Body of pancreas (tissue), 4 donors: ENCODE measurements at regions of chr19 and their contacts with region 1.

Region 1: GRCh38 chr19:1549332-1549945 is 18.7 kb downstream of the MEX3D start:
- DNase-seq: no peak
- ATAC-seq: no peak
- H3K4me3 ChIP-seq: no peak overlapping the region
- H3K27ac ChIP-seq: no peak overlapping the region
- H3K4me1 ChIP-seq: peaks cover 3% of the 10 kb centered on the region
- H3K27me3 ChIP-seq: peaks cover 0 to 9% of the 10 kb centered on the region in 2 donors
- CTCF ChIP-seq: no peak
- POLR2A ChIP-seq: no peak

Region 2: GRCh38 chr19:1690699-1691307 is 141.4 kb after region 1 on chr19:
- intact Hi-C with region 1: no loop called
- DNase-seq: peak in 3 of 4 donors; percentile 32 to 50 (median 35)
- ATAC-seq: no peak
- H3K4me3 ChIP-seq: no peak overlapping the region
- H3K27ac ChIP-seq: no peak overlapping the region
- H3K4me1 ChIP-seq: no peaks in the 10 kb centered on the region
- H3K27me3 ChIP-seq: peaks cover 0 to 8% of the 10 kb centered on the region in 2 donors
- CTCF ChIP-seq: no peak
- POLR2A ChIP-seq: no peak

Region 3: DNA sequence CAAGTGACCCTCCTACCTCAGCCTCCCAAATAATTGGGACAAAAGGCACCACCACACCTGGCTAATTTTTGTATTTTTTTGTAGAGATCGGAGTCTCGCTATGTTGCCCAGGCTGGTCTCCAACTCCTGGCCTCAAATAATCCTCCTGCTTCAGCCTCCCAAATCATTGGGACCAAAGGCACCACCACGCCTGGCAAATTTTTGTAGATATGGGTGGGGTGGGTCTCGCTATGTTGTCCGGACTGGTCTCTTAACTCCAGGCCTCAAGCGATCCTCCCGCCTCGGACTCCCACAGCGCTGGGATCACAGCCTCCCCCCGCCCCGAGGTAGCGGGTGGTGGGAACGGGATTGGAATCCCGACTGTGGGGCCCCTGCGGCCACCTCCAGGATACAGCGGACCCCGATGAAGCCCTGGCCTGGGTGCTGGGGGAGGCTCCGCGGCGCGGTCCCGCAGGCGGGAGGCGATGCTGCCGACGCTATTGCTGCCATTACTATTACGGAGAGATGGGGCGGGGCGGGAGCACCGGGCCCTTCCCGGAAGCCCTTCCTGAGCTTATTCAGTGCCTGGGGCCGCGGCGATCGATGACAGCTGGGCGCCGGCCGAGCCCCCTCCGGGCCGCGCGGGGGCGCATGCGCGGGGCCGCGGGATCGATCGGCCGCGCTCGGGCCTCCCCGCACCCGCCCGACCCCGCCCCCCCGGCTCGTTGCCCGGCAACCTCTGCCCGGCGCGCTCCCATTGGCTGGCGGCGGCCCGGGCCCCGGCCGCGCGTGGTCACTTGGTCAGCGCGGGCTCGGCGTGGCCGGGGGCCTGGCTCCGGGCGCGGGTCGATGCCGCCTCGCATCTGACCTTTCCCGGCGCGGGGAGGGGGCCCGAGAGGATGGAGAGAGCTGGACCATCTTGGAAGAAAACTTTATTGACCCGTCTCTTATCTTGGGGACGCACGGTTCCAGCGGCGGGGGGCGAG is 175.9 kb after region 1 on chr19:
- intact Hi-C with region 1: no loop called
- DNase-seq: peak; percentile 69 to 79 (median 72)
- ATAC-seq: peak; percentile 89
- H3K4me3 ChIP-seq: no peak overlapping the region
- H3K27ac ChIP-seq: no peak overlapping the region
- H3K4me1 ChIP-seq: peaks cover 14% of the 10 kb centered on the region
- H3K27me3 ChIP-seq: peaks cover 0 to 18% of the 10 kb centered on the region in 2 donors
- CTCF ChIP-seq: peak in 1 of 7 experiments; percentile 17
- POLR2A ChIP-seq: no peak

Region 4: GRCh38 chr19:1767464-1767933 is 218.1 kb after region 1 on chr19:
- intact Hi-C with region 1: loop called (anchors 5 kb)
- DNase-seq: peak; percentile 13 to 55 (median 40)
- ATAC-seq: peak; percentile 68
- H3K4me3 ChIP-seq: no peak overlapping the region
- H3K27ac ChIP-seq: no peak overlapping the region
- H3K4me1 ChIP-seq: no peaks in the 10 kb centered on the region
- H3K27me3 ChIP-seq: peaks cover 0 to 63% of the 10 kb centered on the region in 2 donors
- CTCF ChIP-seq: peak; percentile 81 to 98 (median 91)
- POLR2A ChIP-seq: no peak